Naive thymus-derived CD4-positive, alpha-beta T cell (primary cell): ENCODE measurements at regions of chr9 and their contacts with region 1.

Region 1: GRCh38 chr9:613771-614347 is 227.6 kb upstream of the DMRT1 start:
- DNase-seq: peak in 6 of 9 donors; percentile 12 to 33 (median 24)
- ATAC-seq: peak; percentile 89
- H3K4me3 ChIP-seq: no peak overlapping the region
- H3K4me3 Mint-ChIP-seq: no peak overlapping the region
- H3K27ac ChIP-seq: no peak overlapping the region
- H3K27ac Mint-ChIP-seq: peak overlapping the region in 1 of 9 donors; percentile 34
- H3K4me1 ChIP-seq: no peaks in the 10 kb centered on the region
- H3K4me1 Mint-ChIP-seq: peaks cover 0 to 8% (median 4%) of the 10 kb centered on the region in 7 donors
- H3K27me3 ChIP-seq: no peaks in the 10 kb centered on the region
- H3K27me3 Mint-ChIP-seq: no peaks in the 10 kb centered on the region

Region 2: GRCh38 chr9:757246-757881 is 143.5 kb after region 1 on chr9:
- CTCF ChIA-PET with region 1: interaction called, 6 read pairs
- POLR2A ChIA-PET with region 1: no interaction called
- intact Hi-C with region 1: loop called in 1 of 2 experiments (anchors 2 kb)
- DNase-seq: peak in 1 of 9 donors; percentile 4
- ATAC-seq: peak; percentile 40
- H3K4me3 ChIP-seq: no peak overlapping the region
- H3K4me3 Mint-ChIP-seq: no peak overlapping the region
- H3K27ac ChIP-seq: no peak overlapping the region
- H3K27ac Mint-ChIP-seq: no peak overlapping the region
- H3K4me1 ChIP-seq: no peaks in the 10 kb centered on the region
- H3K4me1 Mint-ChIP-seq: peaks cover 0 to 22% (median 0%) of the 10 kb centered on the region in 7 donors
- H3K27me3 ChIP-seq: no peaks in the 10 kb centered on the region
- H3K27me3 Mint-ChIP-seq: peaks cover 0 to 10% (median 5%) of the 10 kb centered on the region in 5 donors

Region 3: DNA sequence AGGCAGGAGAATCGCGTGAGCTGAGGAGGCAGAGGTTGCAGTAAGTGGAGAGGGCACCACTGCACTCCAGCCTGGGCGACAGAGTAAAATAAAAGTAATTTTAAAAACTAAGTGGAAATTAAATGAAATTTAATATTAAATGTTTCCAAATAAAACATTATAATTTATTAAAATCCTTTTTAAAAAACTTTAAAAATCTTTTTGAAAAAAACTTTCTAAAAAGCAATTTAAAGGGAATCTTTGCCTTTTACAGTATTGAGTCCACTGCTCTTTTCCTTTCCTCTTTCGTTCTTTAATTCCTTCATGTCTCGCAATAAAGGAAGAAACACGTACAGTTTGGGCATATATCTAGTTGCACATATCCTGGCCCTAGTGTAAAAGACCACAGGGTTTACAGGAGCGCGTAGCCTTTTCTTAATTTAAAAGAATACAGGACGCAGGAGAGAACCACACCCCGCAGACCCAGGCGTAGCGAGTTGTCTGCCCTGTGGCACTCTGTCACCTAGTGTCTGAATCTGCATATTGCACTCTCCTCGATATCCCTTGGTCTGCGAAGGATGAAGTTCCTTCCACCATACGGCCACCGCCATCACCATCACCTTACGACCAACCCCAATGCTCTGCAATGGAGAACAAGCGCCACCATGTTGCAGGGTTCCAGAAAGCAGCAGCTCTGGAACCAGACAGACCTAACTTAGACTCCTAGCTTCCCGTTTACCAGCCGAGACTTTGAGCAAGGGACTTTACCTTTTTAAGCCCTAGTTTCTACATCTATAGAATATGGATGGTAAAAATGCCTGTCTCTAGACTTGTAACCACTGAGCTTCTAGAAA is 150.0 kb after region 1 on chr9:
- CTCF ChIA-PET with region 1: interaction called, 4 read pairs
- POLR2A ChIA-PET with region 1: interaction called, 4 read pairs
- intact Hi-C with region 1: loop called (anchors 1 kb)
- DNase-seq: peak in 6 of 9 donors; percentile 19 to 35 (median 25)
- ATAC-seq: peak; percentile 78
- H3K4me3 ChIP-seq: no peak overlapping the region
- H3K4me3 Mint-ChIP-seq: peak overlapping the region in 3 of 10 donors; percentile 0 to 67 (median 6)
- H3K27ac ChIP-seq: no peak overlapping the region
- H3K27ac Mint-ChIP-seq: peak overlapping the region in 1 of 9 donors; percentile 59
- H3K4me1 ChIP-seq: no peaks in the 10 kb centered on the region
- H3K4me1 Mint-ChIP-seq: peaks cover 0 to 8% (median 6%) of the 10 kb centered on the region in 7 donors
- H3K27me3 ChIP-seq: no peaks in the 10 kb centered on the region
- H3K27me3 Mint-ChIP-seq: peaks cover 11 to 40% (median 20%) of the 10 kb centered on the region in 5 donors

Region 4: DNA sequence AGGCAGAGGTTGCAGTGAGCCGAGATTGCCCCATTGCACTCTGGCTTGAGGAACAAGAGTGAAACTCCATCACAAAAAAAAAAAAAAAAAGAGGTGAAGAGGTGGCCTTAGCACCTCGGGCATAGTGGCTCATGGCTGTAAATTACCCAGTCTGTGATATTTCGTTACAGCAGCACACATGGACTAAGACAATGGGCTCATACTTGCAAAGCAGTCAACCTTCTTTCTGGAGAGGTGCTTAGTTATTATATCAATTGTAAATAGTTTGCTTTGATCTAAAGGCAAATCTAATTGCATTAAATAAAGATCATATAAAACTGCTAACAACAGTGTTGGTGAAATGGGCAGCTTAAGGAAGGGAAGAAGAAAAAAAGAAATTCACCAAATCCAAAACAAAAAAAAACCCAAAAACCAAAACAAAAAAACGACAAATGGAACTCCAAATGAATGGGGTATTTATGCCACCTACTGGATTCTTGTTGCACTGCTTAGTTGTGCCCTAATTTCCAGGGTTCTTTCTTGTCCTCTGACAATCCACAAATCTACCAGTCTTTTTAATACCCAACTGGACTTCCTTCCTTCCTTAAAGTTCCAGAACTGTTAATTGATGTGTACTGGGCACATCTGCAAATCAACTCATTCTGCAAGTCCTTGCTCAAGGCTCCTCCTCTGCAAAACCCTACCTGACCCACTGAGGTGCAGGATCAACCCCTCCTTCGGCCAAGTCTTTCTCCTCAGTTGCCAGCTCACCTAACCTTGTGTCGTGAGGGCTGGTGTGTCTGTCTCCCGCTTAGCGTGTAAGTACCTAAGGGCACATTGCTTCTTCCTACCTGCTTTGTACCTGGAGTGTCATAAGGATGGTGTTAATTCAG is 192.7 kb after region 1 on chr9:
- CTCF ChIA-PET with region 1: interaction called, 3 read pairs
- POLR2A ChIA-PET with region 1: no interaction called
- intact Hi-C with region 1: loop called (anchors 1 kb)
- DNase-seq: peak in 4 of 9 donors; percentile 12 to 35 (median 29)
- ATAC-seq: peak; percentile 41
- H3K4me3 ChIP-seq: no peak overlapping the region
- H3K4me3 Mint-ChIP-seq: no peak overlapping the region
- H3K27ac ChIP-seq: no peak overlapping the region
- H3K27ac Mint-ChIP-seq: no peak overlapping the region
- H3K4me1 ChIP-seq: no peaks in the 10 kb centered on the region
- H3K4me1 Mint-ChIP-seq: no peaks in the 10 kb centered on the region
- H3K27me3 ChIP-seq: no peaks in the 10 kb centered on the region
- H3K27me3 Mint-ChIP-seq: peaks cover 5 to 27% (median 10%) of the 10 kb centered on the region in 5 donors

Region 5: GRCh38 chr9:893843-894420 is 280.1 kb after region 1 on chr9:
- CTCF ChIA-PET with region 1: no interaction called
- POLR2A ChIA-PET with region 1: no interaction called
- intact Hi-C with region 1: loop called (anchors 10 kb)
- DNase-seq: peak in 8 of 9 donors; percentile 7 to 50 (median 37)
- ATAC-seq: peak; percentile 94
- H3K4me3 ChIP-seq: no peak overlapping the region
- H3K4me3 Mint-ChIP-seq: peak overlapping the region in 9 of 10 donors; percentile 23 to 70 (median 48)
- H3K27ac ChIP-seq: no peak overlapping the region
- H3K27ac Mint-ChIP-seq: peak overlapping the region in 2 of 9 donors; percentile 31 to 52
- H3K4me1 ChIP-seq: peaks cover 0 to 5% of the 10 kb centered on the region in 2 donors
- H3K4me1 Mint-ChIP-seq: peaks cover 4 to 11% (median 8%) of the 10 kb centered on the region in 7 donors
- H3K27me3 ChIP-seq: no peaks in the 10 kb centered on the region
- H3K27me3 Mint-ChIP-seq: peaks cover 7 to 24% (median 14%) of the 10 kb centered on the region in 5 donors

Region 6: GRCh38 chr9:1009101-1009707 is 395.3 kb after region 1 on chr9:
- CTCF ChIA-PET with region 1: no interaction called
- POLR2A ChIA-PET with region 1: interaction called, 6 read pairs
- intact Hi-C with region 1: loop called in 1 of 2 experiments (anchors 2 kb)
- DNase-seq: peak; percentile 37 to 76 (median 58)
- ATAC-seq: peak; percentile 92
- H3K4me3 ChIP-seq: no peak overlapping the region
- H3K4me3 Mint-ChIP-seq: no peak overlapping the region
- H3K27ac ChIP-seq: no peak overlapping the region
- H3K27ac Mint-ChIP-seq: no peak overlapping the region
- H3K4me1 ChIP-seq: no peaks in the 10 kb centered on the region
- H3K4me1 Mint-ChIP-seq: peaks cover 0 to 10% (median 0%) of the 10 kb centered on the region in 7 donors
- H3K27me3 ChIP-seq: no peaks in the 10 kb centered on the region
- H3K27me3 Mint-ChIP-seq: peaks cover 15 to 43% (median 34%) of the 10 kb centered on the region in 5 donors